Mucosa of descending colon (tissue), 3 donors: ENCODE measurements at regions of chr7 and their contacts with region 1.

Region 1: DNA sequence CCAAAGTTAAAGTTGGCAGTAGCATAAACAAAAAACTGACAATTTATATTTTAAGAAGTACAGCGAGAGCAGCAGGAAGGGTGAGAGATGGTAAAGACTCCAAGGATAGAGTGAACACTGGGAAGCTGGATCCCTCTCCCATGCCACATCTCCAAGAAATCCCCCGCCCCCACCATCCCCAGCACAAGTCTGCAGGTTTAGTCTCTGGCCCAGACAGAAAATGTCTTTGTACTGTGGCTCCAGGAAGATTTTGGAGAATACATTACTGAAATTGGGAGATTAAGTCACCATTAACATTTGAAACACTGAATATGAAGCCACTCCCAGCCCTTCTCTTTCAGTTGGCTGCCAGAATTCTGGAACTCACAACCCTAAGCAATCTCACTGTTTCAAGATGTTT is 140.3 kb downstream of the MACC1 start:
- DNase-seq: no peak
- ATAC-seq: no peak
- H3K4me3 ChIP-seq: no peak overlapping the region
- H3K4me1 ChIP-seq: no peaks in the 10 kb centered on the region
- CTCF ChIP-seq: no peak

Region 2: DNA sequence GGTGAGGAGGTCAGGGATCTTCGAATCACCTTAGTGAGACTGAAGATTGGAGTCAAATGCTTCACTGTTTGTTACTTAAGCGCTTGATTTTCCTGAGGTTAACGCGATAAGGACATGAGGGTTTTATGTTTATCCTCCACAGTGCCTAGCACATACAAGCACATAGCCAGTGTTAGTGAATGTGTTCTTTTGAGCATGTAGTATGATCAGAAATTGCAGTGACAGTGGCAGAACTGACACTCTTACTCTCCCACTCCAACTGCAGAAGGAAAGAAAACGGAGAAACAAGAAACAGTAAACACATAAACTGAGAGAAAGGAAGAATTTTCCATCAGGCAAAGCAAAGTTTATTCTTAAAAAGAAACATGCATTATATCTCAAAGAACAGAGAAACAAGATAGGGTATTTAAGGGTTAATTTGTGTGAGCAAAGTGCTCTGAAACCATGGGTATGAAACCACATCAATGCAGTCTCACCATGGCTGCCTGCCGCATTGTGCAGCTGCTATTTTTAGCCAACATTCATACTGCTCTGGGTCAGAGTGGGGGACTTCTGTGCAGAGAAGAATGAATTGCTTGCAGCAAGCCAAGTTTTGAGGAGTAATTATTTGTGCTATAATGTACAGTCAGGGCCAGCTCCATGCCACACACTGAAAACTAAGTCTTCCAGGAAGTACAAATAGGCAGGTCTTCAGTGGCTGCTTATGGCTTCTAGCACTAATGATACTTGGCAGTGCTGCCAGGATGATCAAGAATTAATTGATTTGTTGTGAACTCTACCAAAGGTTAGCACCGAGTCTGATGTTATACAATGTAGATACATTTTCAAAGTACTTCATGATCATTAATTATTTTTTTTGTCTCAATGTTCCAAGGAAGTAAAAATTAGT is 11.6 kb before region 1 on chr7:
- intact Hi-C with region 1: loop called in 1 of 2 experiments (anchors 1 kb)
- DNase-seq: peak in 1 of 3 donors; percentile 36
- ATAC-seq: no peak
- H3K4me3 ChIP-seq: no peak overlapping the region
- H3K4me1 ChIP-seq: no peaks in the 10 kb centered on the region
- CTCF ChIP-seq: no peak